ENCODE measurements at regions of chr9 and their contacts with region 1.

Region 1: GRCh38 chr9:14466429-14466818 is 152.5 kb upstream of the NFIB start:
- DNase-seq: no peak
- ATAC-seq: no peak

Region 2: GRCh38 chr9:14652729-14653377 is 186.4 kb after region 1 on chr9:
- intact Hi-C with region 1: loop called in 1 of 2 experiments (anchors 2 kb)
- DNase-seq: no peak
- ATAC-seq: no peak

Region 3: GRCh38 chr9:14670718-14671117 is 204.3 kb after region 1 on chr9:
- intact Hi-C with region 1: no loop called
- DNase-seq: no peak
- ATAC-seq: no peak

Region 4: GRCh38 chr9:14956208-14956607 is 489.8 kb after region 1 on chr9:
- intact Hi-C with region 1: no loop called
- DNase-seq: no peak
- ATAC-seq: peak; percentile 44 to 47

Measured in left cardiac atrium (tissue), 4 donors.